ENCODE measurements at regions of chr2 and their contacts with region 1.

Region 1: DNA sequence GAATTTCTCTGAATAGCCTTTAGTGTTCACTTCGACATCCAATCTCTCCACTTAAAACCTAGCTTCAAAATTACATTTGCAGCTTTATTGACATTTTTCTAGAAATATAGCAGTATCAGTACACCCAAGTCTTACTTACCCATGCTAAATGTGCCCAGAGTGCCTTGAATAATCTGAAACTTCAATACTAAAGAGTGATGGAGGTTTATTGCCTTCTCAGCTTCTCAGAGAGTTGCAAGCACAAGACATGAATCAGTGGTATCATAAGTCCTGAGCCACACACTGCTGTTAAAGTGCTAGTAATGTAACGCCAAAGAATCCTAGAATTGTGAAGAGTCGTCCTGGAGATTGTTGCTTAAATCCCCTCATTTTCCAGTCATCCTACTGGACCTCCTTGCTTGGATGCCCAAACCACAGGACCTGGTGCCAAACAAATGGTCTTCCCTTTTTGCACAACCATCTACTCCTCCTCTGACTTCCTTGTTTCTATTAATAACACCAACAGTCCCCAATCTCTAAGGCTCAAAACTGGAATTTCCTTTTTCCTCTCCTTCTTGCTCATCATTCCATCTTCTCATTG is 83.2 kb upstream of the SPATS2L start:
- DNase-seq: no peak
- H3K4me3 ChIP-seq: no peak overlapping the region
- H3K4me3 Mint-ChIP-seq: no peak overlapping the region
- H3K27ac Mint-ChIP-seq: peak overlapping the region; percentile 17
- H3K4me1 ChIP-seq: peaks cover 50% of the 10 kb centered on the region
- H3K4me1 Mint-ChIP-seq: peaks cover 49% of the 10 kb centered on the region
- H3K27me3 ChIP-seq: no peaks in the 10 kb centered on the region
- H3K27me3 Mint-ChIP-seq: no peaks in the 10 kb centered on the region
- CTCF ChIP-seq: no peak

Region 2: GRCh38 chr2:200077210-200077650 is 146.1 kb before region 1 on chr2:
- CTCF ChIA-PET with region 1: no interaction called
- POLR2A ChIA-PET with region 1: no interaction called
- intact Hi-C with region 1: loop called (anchors 1 kb)
- DNase-seq: peak in 1 of 2 experiments; percentile 67
- H3K4me3 ChIP-seq: no peak overlapping the region
- H3K4me3 Mint-ChIP-seq: peak overlapping the region; percentile 58
- H3K27ac Mint-ChIP-seq: peak overlapping the region; percentile 67
- H3K4me1 ChIP-seq: peaks cover 30% of the 10 kb centered on the region
- H3K4me1 Mint-ChIP-seq: peaks cover 29% of the 10 kb centered on the region
- H3K27me3 ChIP-seq: no peaks in the 10 kb centered on the region
- H3K27me3 Mint-ChIP-seq: no peaks in the 10 kb centered on the region
- CTCF ChIP-seq: no peak

Region 3: GRCh38 chr2:200168641-200169555 is 54.4 kb before region 1 on chr2:
- CTCF ChIA-PET with region 1: no interaction called
- POLR2A ChIA-PET with region 1: no interaction called
- intact Hi-C with region 1: loop called (anchors 2 kb)
- DNase-seq: no peak
- H3K4me3 ChIP-seq: no peak overlapping the region
- H3K4me3 Mint-ChIP-seq: no peak overlapping the region
- H3K27ac Mint-ChIP-seq: peak overlapping the region; percentile 8
- H3K4me1 ChIP-seq: peaks cover 14% of the 10 kb centered on the region
- H3K4me1 Mint-ChIP-seq: peaks cover 21% of the 10 kb centered on the region
- H3K27me3 ChIP-seq: no peaks in the 10 kb centered on the region
- H3K27me3 Mint-ChIP-seq: no peaks in the 10 kb centered on the region
- CTCF ChIP-seq: no peak

Region 4: DNA sequence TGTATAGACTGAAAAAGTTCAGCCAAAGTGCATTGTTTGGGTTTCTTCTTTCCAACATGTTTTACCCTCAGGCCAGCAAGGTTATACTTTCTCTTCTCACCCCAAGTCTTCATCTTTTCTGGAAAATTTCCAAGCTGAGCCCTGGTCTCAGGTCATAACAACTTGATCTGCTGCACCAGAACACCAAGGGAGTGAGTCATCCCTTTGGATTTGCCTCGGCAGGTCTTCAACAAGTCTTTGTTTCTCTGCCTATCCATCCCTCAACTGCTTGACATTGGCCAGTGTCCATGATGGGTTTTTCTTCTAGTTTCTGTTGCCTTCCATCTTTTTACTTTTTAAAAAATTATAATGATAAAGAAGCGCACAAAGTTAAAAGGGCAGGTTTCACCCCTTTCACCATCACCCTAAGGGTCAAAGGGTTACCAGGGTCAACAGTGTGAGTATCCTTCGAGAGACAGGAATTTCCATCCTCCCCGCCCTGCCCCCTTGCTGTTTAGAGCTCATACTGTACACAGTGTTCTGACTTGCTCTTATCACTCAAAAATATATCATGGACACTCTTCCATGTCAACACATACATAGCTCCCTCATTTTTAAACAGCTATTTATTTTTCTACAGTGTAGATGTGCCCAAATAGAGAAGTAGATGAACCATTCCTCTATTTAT is 77.5 kb after region 1 on chr2:
- CTCF ChIA-PET with region 1: no interaction called
- POLR2A ChIA-PET with region 1: interaction called, 10 read pairs
- intact Hi-C with region 1: loop called (anchors 1 kb)
- DNase-seq: no peak
- H3K4me3 ChIP-seq: no peak overlapping the region
- H3K4me3 Mint-ChIP-seq: no peak overlapping the region
- H3K27ac Mint-ChIP-seq: peak overlapping the region; percentile 39
- H3K4me1 ChIP-seq: peaks cover 48% of the 10 kb centered on the region
- H3K4me1 Mint-ChIP-seq: peaks cover 46% of the 10 kb centered on the region
- H3K27me3 ChIP-seq: no peaks in the 10 kb centered on the region
- H3K27me3 Mint-ChIP-seq: no peaks in the 10 kb centered on the region
- CTCF ChIP-seq: no peak

Region 5: GRCh38 chr2:200352636-200353035 is 129.3 kb after region 1 on chr2:
- CTCF ChIA-PET with region 1: no interaction called
- POLR2A ChIA-PET with region 1: no interaction called
- intact Hi-C with region 1: loop called (anchors 1 kb)
- DNase-seq: peak; percentile 78 to 82
- H3K4me3 ChIP-seq: no peak overlapping the region
- H3K4me3 Mint-ChIP-seq: peak overlapping the region; percentile 67
- H3K27ac Mint-ChIP-seq: peak overlapping the region; percentile 89
- H3K4me1 ChIP-seq: peaks cover 78% of the 10 kb centered on the region
- H3K4me1 Mint-ChIP-seq: peaks cover 74% of the 10 kb centered on the region
- H3K27me3 ChIP-seq: no peaks in the 10 kb centered on the region
- H3K27me3 Mint-ChIP-seq: no peaks in the 10 kb centered on the region
- CTCF ChIP-seq: no peak

Region 6: DNA sequence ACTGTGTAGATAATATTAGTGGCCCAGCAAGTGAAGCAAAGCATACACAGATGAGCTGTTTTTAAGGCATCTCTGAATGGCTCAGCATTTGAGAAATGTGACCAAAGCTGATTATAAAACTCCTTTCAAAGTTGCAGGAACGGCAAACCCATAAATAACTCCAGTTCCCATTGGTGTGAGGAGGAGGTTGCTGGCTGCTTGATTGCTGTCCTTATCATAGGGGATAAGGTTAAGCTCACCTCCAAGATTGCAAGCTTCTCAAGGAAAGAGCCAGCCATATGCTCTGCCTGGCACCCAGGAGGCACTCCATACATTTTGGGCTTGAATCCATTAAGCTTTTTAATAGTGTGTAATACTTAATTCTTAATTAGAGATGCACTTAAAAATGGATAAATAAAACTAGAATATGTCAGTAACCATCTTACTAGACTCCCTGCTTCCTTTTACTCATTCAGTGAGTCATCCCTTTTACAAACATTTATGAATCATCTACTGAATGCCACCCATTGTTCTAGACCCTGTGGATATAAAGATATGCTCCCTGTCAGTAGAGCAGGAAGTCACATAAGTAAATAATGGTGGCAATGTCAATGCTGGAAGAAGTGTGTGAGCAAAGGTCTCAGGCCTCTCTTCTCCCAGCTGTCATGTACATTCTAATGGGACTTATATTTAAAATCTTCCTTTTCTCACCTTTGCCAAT is 182.5 kb after region 1 on chr2:
- CTCF ChIA-PET with region 1: no interaction called
- POLR2A ChIA-PET with region 1: no interaction called
- intact Hi-C with region 1: loop called (anchors 1 kb)
- DNase-seq: peak; percentile 82 to 87
- H3K4me3 ChIP-seq: no peak overlapping the region
- H3K4me3 Mint-ChIP-seq: peak overlapping the region; percentile 55
- H3K27ac Mint-ChIP-seq: peak overlapping the region; percentile 60
- H3K4me1 ChIP-seq: peaks cover 66% of the 10 kb centered on the region
- H3K4me1 Mint-ChIP-seq: peaks cover 70% of the 10 kb centered on the region
- H3K27me3 ChIP-seq: no peaks in the 10 kb centered on the region
- H3K27me3 Mint-ChIP-seq: no peaks in the 10 kb centered on the region
- CTCF ChIP-seq: no peak

Measured in Caco-2 (cell line).